Naive thymus-derived CD4-positive, alpha-beta T cell (primary cell): ENCODE measurements at regions of chr14 and their contacts with region 1.

Region 1: GRCh38 chr14:61420326-61420725 is 98.9 kb downstream of the PRKCH start:
- DNase-seq: peak in 1 of 9 donors; percentile 37
- ATAC-seq: peak; percentile 24
- H3K4me3 ChIP-seq: no peak overlapping the region
- H3K4me3 Mint-ChIP-seq: peak overlapping the region in 8 of 10 donors; percentile 43 to 77 (median 58)
- H3K27ac ChIP-seq: peak overlapping the region; percentile 41
- H3K27ac Mint-ChIP-seq: peak overlapping the region in 6 of 9 donors; percentile 75 to 88 (median 83)
- H3K4me1 ChIP-seq: peaks cover 81 to 83% of the 10 kb centered on the region in 2 donors
- H3K4me1 Mint-ChIP-seq: peaks cover 4 to 90% (median 26%) of the 10 kb centered on the region in 7 donors
- H3K27me3 ChIP-seq: no peaks in the 10 kb centered on the region
- H3K27me3 Mint-ChIP-seq: no peaks in the 10 kb centered on the region

Region 2: DNA sequence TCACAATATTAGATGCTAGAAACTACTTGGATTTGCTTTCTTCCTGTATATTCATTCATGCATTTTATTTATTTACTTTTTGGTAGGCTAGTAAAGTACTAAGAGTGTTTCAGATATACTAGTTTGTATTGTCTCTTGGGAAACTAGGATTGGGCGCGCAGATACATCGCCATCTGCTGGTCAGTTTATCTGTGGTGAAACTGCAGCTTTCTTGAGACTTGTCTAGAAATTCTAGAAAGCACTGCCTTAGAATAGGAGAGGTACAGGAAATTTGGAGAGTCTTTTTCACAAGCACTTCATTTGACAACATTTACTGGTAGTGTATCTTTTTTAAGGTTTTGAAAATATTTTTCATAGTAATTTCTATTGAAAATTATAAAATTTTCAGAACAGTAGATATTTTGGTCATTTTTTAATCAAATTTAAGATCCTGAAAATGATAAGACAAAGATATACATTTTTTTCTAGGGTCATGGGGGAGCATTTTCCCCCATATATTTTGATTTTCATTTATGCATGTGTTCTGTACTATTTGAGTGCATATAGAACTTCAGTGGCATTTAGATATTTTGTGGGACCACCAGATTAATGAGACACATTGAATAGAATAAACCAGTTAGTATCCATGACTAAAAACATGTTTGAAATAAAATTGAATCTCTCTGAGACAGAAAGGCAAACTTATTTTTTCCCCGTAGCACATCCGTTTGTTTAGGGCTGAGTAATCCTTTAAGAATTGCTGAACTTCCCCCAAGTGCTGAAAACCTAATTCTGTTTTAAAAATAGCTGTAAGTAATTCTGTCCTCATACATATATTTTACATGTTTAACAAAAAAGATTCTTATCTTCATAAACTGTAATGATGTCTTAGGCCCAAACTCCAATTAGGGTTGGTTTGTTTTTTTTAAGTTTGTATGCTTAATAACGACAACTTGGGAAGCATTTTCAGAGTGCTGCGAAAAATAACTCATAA is 394.8 kb before region 1 on chr14:
- CTCF ChIA-PET with region 1: no interaction called
- POLR2A ChIA-PET with region 1: no interaction called
- intact Hi-C with region 1: no loop called
- DNase-seq: peak in 7 of 9 donors; percentile 29 to 55 (median 43)
- ATAC-seq: peak; percentile 63
- H3K4me3 ChIP-seq: no peak overlapping the region
- H3K4me3 Mint-ChIP-seq: no peak overlapping the region
- H3K27ac ChIP-seq: no peak overlapping the region
- H3K27ac Mint-ChIP-seq: no peak overlapping the region
- H3K4me1 ChIP-seq: no peaks in the 10 kb centered on the region
- H3K4me1 Mint-ChIP-seq: no peaks in the 10 kb centered on the region
- H3K27me3 ChIP-seq: no peaks in the 10 kb centered on the region
- H3K27me3 Mint-ChIP-seq: no peaks in the 10 kb centered on the region

Region 3: DNA sequence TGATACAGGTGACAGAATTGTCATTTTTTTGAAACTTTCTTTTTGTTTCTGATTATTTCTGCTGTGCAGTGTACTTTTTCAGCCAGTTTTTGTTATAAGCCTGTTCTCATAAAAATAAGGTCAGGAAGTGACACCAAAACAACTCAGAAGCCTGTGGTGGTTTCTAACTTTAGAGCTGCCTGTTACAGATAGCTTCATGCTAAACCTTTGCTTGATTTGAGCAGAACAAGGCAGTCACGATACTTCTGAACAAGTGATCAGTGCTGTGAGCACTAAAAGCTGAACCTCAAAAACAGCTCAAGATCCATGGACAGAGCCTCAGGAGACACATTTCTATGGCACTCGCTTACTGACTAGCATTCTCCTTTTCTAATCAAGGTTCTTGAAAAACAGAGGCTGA is 16.9 kb before region 1 on chr14:
- CTCF ChIA-PET with region 1: interaction called, 4 read pairs
- POLR2A ChIA-PET with region 1: interaction called, 10 read pairs
- intact Hi-C with region 1: loop called (anchors 1 kb)
- DNase-seq: peak in 7 of 9 donors; percentile 52 to 79 (median 67)
- ATAC-seq: peak; percentile 89
- H3K4me3 ChIP-seq: peak overlapping the region; percentile 3
- H3K4me3 Mint-ChIP-seq: peak overlapping the region; percentile 17 to 84 (median 76)
- H3K27ac ChIP-seq: peak overlapping the region; percentile 71
- H3K27ac Mint-ChIP-seq: peak overlapping the region in 8 of 9 donors; percentile 76 to 96 (median 91)
- H3K4me1 ChIP-seq: peaks cover 84 to 88% of the 10 kb centered on the region in 2 donors
- H3K4me1 Mint-ChIP-seq: peaks cover 0 to 93% (median 70%) of the 10 kb centered on the region in 7 donors
- H3K27me3 ChIP-seq: no peaks in the 10 kb centered on the region
- H3K27me3 Mint-ChIP-seq: no peaks in the 10 kb centered on the region

Region 4: DNA sequence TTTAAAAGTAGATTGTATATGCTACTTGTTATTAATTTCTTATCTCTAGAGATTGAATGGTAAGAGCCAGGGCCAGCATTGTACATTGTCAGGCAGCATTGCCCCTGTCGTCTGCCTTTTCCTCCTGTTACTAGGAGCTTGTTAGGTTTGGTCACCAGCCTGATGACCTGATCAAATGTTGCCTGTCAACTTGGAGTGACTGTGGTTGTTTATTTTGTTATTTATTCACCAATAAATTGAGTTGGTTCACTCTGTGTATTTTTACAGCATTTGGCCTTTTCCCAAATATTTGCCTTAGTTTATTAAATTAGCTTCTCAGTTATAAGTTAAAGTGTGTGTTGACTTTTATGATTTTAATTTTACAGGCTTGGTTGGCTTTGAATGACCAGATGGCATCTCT is 10.6 kb before region 1 on chr14:
- CTCF ChIA-PET with region 1: interaction called, 4 read pairs
- POLR2A ChIA-PET with region 1: interaction called, 10 read pairs
- intact Hi-C with region 1: loop called (anchors 1 kb)
- DNase-seq: no peak
- ATAC-seq: no peak
- H3K4me3 ChIP-seq: no peak overlapping the region
- H3K4me3 Mint-ChIP-seq: no peak overlapping the region
- H3K27ac ChIP-seq: no peak overlapping the region
- H3K27ac Mint-ChIP-seq: peak overlapping the region in 1 of 9 donors; percentile 67
- H3K4me1 ChIP-seq: peaks cover 78 to 92% of the 10 kb centered on the region in 2 donors
- H3K4me1 Mint-ChIP-seq: peaks cover 0 to 50% (median 41%) of the 10 kb centered on the region in 7 donors
- H3K27me3 ChIP-seq: no peaks in the 10 kb centered on the region
- H3K27me3 Mint-ChIP-seq: no peaks in the 10 kb centered on the region

Region 5: GRCh38 chr14:61433169-61433568 is 12.8 kb after region 1 on chr14:
- CTCF ChIA-PET with region 1: interaction called, 3 read pairs
- POLR2A ChIA-PET with region 1: interaction called, 6 read pairs
- intact Hi-C with region 1: loop called (anchors 1 to 2 kb)
- DNase-seq: no peak
- ATAC-seq: no peak
- H3K4me3 ChIP-seq: no peak overlapping the region
- H3K4me3 Mint-ChIP-seq: peak overlapping the region; percentile 30 to 82 (median 56)
- H3K27ac ChIP-seq: peak overlapping the region; percentile 41
- H3K27ac Mint-ChIP-seq: peak overlapping the region in 7 of 9 donors; percentile 70 to 95 (median 86)
- H3K4me1 ChIP-seq: peaks cover 78 to 82% of the 10 kb centered on the region in 2 donors
- H3K4me1 Mint-ChIP-seq: peaks cover 63 to 100% (median 95%) of the 10 kb centered on the region in 7 donors
- H3K27me3 ChIP-seq: no peaks in the 10 kb centered on the region
- H3K27me3 Mint-ChIP-seq: no peaks in the 10 kb centered on the region

Region 6: GRCh38 chr14:61438860-61439684 is 18.7 kb after region 1 on chr14:
- CTCF ChIA-PET with region 1: interaction called, 3 read pairs
- POLR2A ChIA-PET with region 1: interaction called, 6 read pairs
- intact Hi-C with region 1: loop called in 1 of 2 experiments (anchors 1 kb)
- DNase-seq: peak in 7 of 9 donors; percentile 23 to 53 (median 31)
- ATAC-seq: peak; percentile 75
- H3K4me3 ChIP-seq: peak overlapping the region; percentile 45
- H3K4me3 Mint-ChIP-seq: peak overlapping the region; percentile 76 to 88 (median 85)
- H3K27ac ChIP-seq: peak overlapping the region; percentile 64
- H3K27ac Mint-ChIP-seq: peak overlapping the region in 7 of 9 donors; percentile 77 to 96 (median 88)
- H3K4me1 ChIP-seq: peaks cover 74 to 89% of the 10 kb centered on the region in 2 donors
- H3K4me1 Mint-ChIP-seq: peaks cover 58 to 96% (median 90%) of the 10 kb centered on the region in 7 donors
- H3K27me3 ChIP-seq: no peaks in the 10 kb centered on the region
- H3K27me3 Mint-ChIP-seq: no peaks in the 10 kb centered on the region

Region 7: GRCh38 chr14:61444215-61444768 is 24.0 kb after region 1 on chr14:
- CTCF ChIA-PET with region 1: no interaction called
- POLR2A ChIA-PET with region 1: interaction called, 6 read pairs
- intact Hi-C with region 1: loop called in 1 of 2 experiments (anchors 1 kb)
- DNase-seq: peak in 8 of 9 donors; percentile 36 to 77 (median 54)
- ATAC-seq: peak; percentile 89
- H3K4me3 ChIP-seq: peak overlapping the region; percentile 9
- H3K4me3 Mint-ChIP-seq: peak overlapping the region; percentile 61 to 89 (median 82)
- H3K27ac ChIP-seq: peak overlapping the region; percentile 59
- H3K27ac Mint-ChIP-seq: peak overlapping the region in 8 of 9 donors; percentile 86 to 97 (median 92)
- H3K4me1 ChIP-seq: peaks cover 77 to 90% of the 10 kb centered on the region in 2 donors
- H3K4me1 Mint-ChIP-seq: peaks cover 56 to 99% (median 93%) of the 10 kb centered on the region in 7 donors
- H3K27me3 ChIP-seq: no peaks in the 10 kb centered on the region
- H3K27me3 Mint-ChIP-seq: no peaks in the 10 kb centered on the region

Region 8: DNA sequence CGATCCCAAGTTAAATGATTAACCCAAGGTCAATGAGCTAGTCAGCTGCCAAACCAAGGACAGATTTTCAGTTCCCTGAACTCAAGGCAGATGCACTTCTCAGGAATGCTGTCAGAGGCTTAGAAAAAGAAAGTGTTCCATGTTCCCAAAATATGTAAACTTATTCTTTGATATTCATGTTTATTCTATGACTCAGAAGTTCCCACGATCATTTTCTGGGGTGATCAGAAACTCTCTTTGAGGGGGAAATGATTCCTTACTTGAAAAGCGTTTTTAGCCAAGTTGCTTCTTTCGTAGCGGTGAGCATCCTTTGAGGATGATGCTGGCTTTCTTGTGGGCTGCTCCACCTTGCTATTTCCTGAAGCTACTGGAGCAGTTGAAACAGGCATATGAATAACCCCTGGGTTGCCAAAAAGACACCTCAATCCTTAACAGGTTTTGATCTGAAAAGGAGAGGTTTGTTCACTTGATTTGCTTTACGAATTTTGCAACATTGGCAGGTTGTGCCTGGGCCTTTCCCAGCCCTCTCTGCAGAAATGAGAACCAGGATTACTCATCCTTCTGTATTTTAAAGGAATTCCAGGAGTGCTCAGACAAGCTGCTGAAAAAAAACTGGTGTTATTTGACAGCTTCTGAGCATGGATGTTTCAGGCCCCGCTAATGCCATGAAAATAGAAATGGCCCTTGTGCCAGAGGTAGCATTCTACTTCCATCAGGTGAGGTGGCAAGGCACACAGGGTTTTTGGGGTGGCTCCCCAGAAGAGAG is 153.6 kb after region 1 on chr14:
- CTCF ChIA-PET with region 1: no interaction called
- POLR2A ChIA-PET with region 1: no interaction called
- intact Hi-C with region 1: no loop called
- DNase-seq: peak in 6 of 9 donors; percentile 40 to 59 (median 52)
- ATAC-seq: peak; percentile 47
- H3K4me3 ChIP-seq: no peak overlapping the region
- H3K4me3 Mint-ChIP-seq: peak overlapping the region in 9 of 10 donors; percentile 12 to 61 (median 48)
- H3K27ac ChIP-seq: no peak overlapping the region
- H3K27ac Mint-ChIP-seq: peak overlapping the region in 5 of 9 donors; percentile 25 to 57 (median 53)
- H3K4me1 ChIP-seq: peaks cover 0 to 36% of the 10 kb centered on the region in 2 donors
- H3K4me1 Mint-ChIP-seq: peaks cover 39 to 84% (median 75%) of the 10 kb centered on the region in 7 donors
- H3K27me3 ChIP-seq: no peaks in the 10 kb centered on the region
- H3K27me3 Mint-ChIP-seq: peaks cover 0 to 24% (median 0%) of the 10 kb centered on the region in 5 donors

Region 9: GRCh38 chr14:61977788-61978187 is 557.5 kb after region 1 on chr14:
- CTCF ChIA-PET with region 1: no interaction called
- POLR2A ChIA-PET with region 1: no interaction called
- intact Hi-C with region 1: no loop called
- DNase-seq: no peak
- ATAC-seq: no peak
- H3K4me3 ChIP-seq: no peak overlapping the region
- H3K4me3 Mint-ChIP-seq: no peak overlapping the region
- H3K27ac ChIP-seq: no peak overlapping the region
- H3K27ac Mint-ChIP-seq: no peak overlapping the region
- H3K4me1 ChIP-seq: no peaks in the 10 kb centered on the region
- H3K4me1 Mint-ChIP-seq: no peaks in the 10 kb centered on the region
- H3K27me3 ChIP-seq: no peaks in the 10 kb centered on the region
- H3K27me3 Mint-ChIP-seq: peaks cover 7 to 52% (median 33%) of the 10 kb centered on the region in 5 donors